Posterior vena cava (tissue), 2 donors: ENCODE measurements at regions of chr16 and their contacts with region 1.

Region 1: GRCh38 chr16:30984669-30985400 is at the start of gene HSD3B7:
- DNase-seq: peak; percentile 97
- total RNA-seq, gene HSD3B7: 38.5 to 39.2 TPM

Region 2: DNA sequence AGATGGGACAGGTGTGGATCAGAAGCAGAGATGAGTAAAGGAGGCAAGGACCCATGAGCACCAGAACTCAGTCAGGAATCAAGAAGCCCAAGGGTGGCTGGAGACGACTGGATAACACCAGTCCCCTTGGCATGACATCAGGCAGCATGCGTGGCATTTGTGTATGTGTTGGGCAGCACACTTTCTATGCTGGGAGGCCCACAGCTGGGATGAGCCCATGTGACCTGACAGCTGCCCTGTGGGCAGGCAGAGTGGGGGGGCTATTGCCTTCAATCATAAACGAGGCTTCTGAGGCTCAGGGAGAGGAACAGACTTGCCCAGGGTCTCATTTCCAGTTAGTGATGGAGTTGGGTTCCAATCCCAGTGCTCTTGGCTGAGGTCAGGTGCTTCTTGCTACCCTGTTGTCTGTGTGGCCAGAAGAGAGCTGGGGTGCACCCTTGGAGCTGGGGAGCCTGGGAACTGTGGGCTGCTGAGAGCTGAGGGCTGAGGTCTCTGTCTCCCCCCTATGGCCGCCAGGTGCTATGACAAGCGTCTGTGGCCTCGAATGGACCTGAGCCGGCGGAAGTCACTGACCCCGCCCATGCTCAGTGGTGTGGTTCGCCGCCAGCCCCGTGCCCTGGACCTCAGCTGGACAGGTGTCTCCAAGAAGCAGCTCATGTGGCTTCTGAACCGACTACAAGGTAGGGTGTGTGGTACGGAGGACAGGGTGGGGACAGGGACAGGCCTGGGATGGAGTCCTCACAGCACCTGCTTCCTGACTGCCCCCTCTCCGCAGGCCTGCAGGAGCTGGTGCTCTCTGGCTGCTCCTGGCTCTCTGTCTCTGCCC is 43.0 kb before region 1 on chr16:
- intact Hi-C with region 1: no loop called
- DNase-seq: peak; percentile 93

Region 3: DNA sequence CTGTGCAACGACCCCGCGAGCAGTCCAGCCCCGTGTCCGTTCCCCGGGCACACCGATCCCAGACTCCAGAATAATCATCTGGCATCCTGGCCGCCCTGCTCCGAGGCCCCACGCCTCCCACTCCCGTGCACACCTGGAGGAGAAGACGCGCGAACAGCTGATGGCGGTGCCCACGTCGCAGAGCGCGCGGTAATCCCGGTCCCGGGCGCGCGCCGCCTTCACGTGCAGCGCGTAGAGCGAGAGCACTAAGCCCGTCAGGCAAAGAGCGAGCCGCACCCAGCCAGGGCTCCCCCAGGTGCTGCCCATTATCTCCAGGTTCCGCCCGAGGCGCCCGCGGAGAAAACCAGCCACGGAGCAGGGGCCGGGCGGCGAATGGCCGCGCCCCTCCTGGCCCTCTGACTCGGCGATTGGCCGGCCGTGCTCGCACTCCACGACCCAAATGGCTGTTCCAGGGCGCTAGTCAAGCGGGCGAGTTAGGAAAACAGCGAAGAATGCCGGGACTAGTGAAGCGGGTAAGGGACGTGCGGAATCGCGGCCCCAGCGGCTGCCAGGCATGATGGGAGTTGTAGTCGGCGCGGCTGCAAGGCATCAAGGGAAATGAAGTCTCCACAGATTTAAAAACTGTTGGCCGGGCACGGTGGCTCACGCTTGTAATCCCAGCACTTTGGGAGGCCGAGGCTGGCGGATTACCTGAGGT is 109.7 kb after region 1 on chr16 and contains the start of gene VKORC1:
- intact Hi-C with region 1: loop called in 1 of 2 experiments (anchors 10 kb)
- DNase-seq: peak; percentile 99
- total RNA-seq, gene VKORC1: 77.8 to 113 TPM

Region 4: DNA sequence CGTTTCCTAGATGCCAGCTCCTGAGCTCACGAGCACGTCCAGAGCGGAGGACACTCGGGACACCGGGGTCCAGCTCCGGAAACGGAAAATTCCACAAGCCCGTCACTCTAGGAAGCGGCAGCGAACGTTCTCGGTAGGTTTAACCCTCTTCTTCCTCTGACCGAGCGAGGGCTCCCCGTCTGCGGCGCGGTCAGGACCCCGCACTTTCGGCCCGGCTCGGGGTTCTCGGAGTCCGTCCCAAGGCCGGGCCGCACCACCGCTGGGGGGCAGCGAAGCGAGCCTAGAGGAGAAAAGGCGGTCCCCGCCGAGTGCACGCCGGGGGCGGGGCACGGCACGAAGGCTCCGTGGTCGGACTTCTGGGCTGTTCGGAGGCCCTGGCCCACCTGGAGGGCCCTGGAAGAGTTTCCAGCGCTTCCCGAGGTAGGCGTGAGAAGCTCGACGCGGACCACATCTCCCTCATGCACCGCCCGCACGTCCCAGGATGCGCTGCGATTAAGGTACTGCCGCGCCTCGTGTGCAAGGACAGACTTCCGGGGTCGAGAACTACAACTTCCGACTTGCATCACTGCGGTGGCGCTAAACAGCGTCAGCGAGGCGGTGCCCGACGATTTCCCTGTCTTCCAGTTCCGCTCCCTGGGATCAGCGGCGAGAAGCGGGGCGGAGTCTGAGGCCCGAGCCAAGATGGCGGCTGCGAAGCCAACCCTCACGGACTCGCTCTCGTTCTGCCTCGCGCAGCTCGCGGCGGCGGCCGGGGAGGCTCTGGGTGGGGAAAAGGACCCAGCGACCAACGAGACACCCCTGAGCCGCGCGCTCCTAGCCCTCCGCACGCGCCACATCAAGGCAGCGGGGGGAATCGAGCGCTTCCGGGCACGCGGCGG is 474.2 kb after region 1 on chr16 and contains the start of gene ARMC5:
- intact Hi-C with region 1: loop called in 1 of 2 experiments (anchors 10 kb)
- DNase-seq: peak; percentile 99
- total RNA-seq, gene ARMC5: 6.4 to 8.3 TPM

Region 5: DNA sequence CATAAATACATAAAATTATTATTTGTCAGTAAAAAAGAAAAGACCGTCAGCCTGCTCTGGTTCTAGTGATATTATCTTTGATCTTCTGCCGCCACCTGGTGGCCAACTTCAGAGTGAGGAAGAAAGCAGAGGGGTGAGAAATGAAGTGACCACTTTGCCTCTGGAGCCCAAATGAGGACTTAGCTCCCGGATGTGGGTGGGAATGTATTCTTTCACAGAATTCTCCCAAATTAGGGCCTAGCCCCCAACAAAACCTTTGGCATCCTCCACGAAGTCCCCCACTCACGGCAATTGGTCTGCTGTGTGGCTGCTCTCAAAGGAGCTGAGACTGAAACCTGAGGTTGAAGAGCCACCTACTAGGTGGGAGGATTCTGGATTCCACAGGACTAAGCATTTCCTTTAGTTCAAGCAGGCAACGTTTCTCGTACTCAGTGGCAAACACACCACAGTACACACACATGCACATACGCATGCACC is 883.9 kb after region 1 on chr16:
- intact Hi-C with region 1: loop called in 1 of 2 experiments (anchors 10 kb)
- DNase-seq: peak; percentile 93